HepG2 (cell line): ENCODE measurements at regions of chr2 and their contacts with region 1.

Region 1: GRCh38 chr2:84486441-84487115 is 27.5 kb upstream of the SUCLG1 start:
- DNase-seq: peak; percentile 81
- ATAC-seq: peak; percentile 75
- H3K4me3 ChIP-seq: no peak overlapping the region; a peak in 1 of 6 replicates
- H3K27ac ChIP-seq: peak overlapping the region; percentile 65
- H3K4me1 ChIP-seq: peaks cover 30% of the 10 kb centered on the region
- H3K27me3 ChIP-seq: no peaks in the 10 kb centered on the region
- CTCF ChIP-seq: no peak
- EP300 ChIP-seq: peak in 1 of 2 experiments; percentile 54; a peak in 1 of 4 replicates
- POLR2A ChIP-seq: no peak
- RAD21 ChIP-seq: no peak

Region 2: GRCh38 chr2:84417453-84418145 is 69.0 kb before region 1 on chr2:
- CTCF ChIA-PET with region 1: no interaction called
- POLR2A ChIA-PET with region 1: no interaction called
- in situ Hi-C with region 1: no loop called
- intact Hi-C with region 1: no loop called
- DNase-seq: no peak
- ATAC-seq: no peak
- H3K4me3 ChIP-seq: no peak overlapping the region
- H3K27ac ChIP-seq: no peak overlapping the region
- H3K4me1 ChIP-seq: no peaks in the 10 kb centered on the region
- H3K27me3 ChIP-seq: no peaks in the 10 kb centered on the region
- CTCF ChIP-seq: no peak
- EP300 ChIP-seq: no peak
- POLR2A ChIP-seq: no peak
- RAD21 ChIP-seq: no peak

Region 3: DNA sequence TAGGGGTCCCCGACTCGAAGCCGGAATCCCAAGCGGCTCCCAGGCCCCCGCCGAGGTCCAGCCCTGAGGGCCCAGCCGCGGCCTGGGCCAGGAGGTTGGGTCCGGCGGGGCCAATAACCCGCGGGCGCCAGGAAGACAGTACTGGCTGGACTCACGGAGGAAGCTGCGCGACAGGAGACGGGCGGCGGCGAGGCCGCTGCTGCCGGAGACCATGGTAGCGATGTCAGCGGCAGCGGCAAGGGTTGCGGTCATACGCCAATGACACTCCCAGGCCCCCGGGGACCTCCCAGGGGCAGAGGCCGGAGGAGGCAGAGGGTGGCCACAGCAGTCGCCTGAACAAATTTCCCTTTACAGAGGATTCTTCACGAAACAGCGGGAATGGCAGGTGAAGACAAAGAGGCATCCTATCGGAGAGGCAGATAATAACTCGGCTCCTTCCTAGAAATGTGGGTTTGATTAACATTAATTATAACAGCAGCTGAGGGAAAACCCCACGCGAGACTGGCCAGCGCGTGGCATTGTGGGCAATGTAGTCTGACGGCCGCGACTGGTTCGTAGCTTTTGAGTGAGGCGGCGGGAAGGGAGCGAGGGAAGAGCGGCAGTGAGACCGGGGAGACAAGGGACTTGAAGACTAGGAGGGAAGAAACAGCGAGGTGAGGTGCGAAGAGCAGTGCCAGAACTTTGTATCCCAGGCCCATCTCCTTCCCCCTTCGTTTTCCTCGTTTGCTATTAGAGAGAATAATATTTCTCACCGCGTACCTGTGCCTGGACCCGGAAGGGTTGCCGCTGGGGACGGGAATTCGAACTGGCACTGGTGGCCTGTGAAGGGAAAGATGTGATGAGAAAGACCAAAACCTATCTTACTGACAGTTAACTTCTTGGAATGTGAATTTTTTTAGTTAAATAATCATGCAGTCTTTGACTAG is 27.3 kb before region 1 on chr2 and contains the start of gene SUCLG1:
- CTCF ChIA-PET with region 1: no interaction called
- POLR2A ChIA-PET with region 1: interaction called, 5 read pairs
- in situ Hi-C with region 1: no loop called
- intact Hi-C with region 1: loop called (anchors 2 kb)
- DNase-seq: peak; percentile 79
- ATAC-seq: peak; percentile 95
- H3K4me3 ChIP-seq: peak within 1 kb of the TSS; percentile 86 to 92 (median 90)
- H3K27ac ChIP-seq: peak within 1 kb of the TSS; percentile 81
- H3K4me1 ChIP-seq: peaks cover 63% of the 10 kb centered on the region
- H3K27me3 ChIP-seq: no peaks in the 10 kb centered on the region; a peak in 1 of 5 replicates
- CTCF ChIP-seq: no peak
- EP300 ChIP-seq: no peak
- POLR2A ChIP-seq: peak; percentile 64 to 75
- RAD21 ChIP-seq: peak; percentile 43; the same call in 1 of the 2 replicates
- total RNA-seq, gene SUCLG1: 121 and 177 TPM in 2 replicates

Region 4: DNA sequence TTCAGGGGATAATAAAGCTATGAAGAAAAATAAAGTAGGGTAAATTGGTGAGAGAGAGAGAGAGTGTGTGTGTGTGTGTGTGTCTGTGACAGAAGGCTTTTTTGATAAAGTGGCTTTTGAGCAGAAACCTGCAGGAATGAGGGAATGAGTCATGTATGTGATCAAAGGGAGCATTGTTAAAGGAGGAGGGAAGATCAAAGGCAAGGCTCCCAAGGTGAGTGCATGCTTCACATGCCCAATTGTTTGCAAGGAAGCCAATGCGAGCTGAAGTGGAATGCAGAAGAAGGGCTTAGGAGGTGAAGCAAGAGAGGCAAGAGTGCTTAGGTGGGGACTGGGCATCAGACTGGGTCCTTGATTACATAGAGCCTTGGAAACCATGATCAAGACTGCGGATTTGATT is 126.5 kb after region 1 on chr2:
- CTCF ChIA-PET with region 1: no interaction called
- POLR2A ChIA-PET with region 1: no interaction called
- in situ Hi-C with region 1: no loop called
- intact Hi-C with region 1: loop called (anchors 5 kb)
- DNase-seq: peak; percentile 97
- ATAC-seq: peak; percentile 96
- H3K4me3 ChIP-seq: no peak overlapping the region
- H3K27ac ChIP-seq: no peak overlapping the region
- H3K4me1 ChIP-seq: peaks cover 15% of the 10 kb centered on the region
- H3K27me3 ChIP-seq: no peaks in the 10 kb centered on the region
- CTCF ChIP-seq: no peak
- EP300 ChIP-seq: peak; percentile 28 to 81; a peak in 1 of 4 replicates
- POLR2A ChIP-seq: no peak
- RAD21 ChIP-seq: no peak